ENCODE measurements at regions of chr1 and their contacts with region 1.

Region 1: DNA sequence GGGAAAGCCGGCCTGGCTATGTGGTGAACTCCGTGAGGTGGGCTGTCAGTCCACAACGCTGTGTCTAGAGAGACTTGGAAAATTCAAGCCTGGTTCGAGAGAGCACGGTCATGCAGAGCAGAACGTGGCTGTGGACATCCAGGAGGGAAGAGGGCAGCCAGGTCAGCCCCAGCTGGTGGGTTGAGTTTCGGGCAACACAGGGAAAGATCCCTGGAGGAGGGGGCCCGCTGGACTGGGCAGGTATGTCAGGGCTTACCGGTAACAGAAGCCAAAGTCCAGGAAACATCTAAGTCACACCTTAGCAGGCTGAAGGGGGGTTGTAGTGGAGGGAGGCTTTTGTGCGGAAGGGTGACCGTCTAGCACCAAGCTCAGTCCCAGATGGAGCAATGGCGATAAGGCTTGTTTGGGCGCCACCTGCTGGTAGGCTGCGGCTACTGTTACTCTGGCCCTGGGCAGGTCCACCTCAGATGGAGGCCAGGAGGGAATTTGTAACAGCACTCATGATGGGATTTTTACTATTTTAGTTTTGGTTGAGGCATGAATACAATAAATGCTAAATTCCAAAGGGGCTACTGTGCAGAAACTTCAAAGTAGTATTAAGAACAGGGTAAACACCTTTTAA is 143.3 kb upstream of the ZNF644 start:
- DNase-seq: peak; percentile 92

Region 2: GRCh38 chr1:91201176-91201575 is 36.0 kb after region 1 on chr1:
- CTCF ChIA-PET with region 1: interaction called, 18 read pairs
- POLR2A ChIA-PET with region 1: no interaction called
- DNase-seq: no peak

Region 3: DNA sequence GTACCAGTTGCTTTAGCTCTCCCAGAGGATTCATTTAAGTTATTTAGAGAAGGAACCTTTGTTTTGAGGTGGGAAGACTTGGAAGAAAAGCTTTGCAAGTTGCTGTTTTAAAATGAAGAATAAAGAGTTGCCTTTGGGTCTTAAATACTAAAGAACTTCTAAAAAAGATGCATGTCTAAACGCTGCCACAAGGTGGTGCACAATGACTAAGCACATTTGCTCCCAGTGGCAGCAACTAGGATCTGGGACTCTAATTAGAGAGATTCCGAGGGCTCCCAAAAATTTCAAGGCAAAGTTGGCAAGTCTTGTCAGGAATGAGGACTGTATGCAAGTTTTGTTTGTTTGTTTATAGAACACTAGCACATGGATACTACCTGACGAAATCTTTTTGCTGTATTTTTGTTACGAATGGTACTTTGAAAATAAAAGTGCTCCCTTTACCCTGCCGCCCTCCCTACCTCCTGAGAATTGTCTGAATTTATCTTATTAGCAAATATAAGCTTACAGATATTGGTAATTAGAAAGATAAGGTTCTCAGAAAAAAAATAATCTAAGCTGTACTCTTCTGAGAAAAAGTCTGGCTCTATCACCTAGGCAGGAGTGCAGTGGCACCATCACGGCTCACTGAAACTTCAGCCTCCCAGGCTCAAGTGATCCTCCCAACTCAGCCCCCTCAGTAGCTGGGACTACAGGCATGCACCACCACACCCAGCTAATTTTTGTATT is 117.7 kb after region 1 on chr1:
- CTCF ChIA-PET with region 1: interaction called, 103 read pairs
- POLR2A ChIA-PET with region 1: no interaction called
- DNase-seq: peak; percentile 67

Region 4: DNA sequence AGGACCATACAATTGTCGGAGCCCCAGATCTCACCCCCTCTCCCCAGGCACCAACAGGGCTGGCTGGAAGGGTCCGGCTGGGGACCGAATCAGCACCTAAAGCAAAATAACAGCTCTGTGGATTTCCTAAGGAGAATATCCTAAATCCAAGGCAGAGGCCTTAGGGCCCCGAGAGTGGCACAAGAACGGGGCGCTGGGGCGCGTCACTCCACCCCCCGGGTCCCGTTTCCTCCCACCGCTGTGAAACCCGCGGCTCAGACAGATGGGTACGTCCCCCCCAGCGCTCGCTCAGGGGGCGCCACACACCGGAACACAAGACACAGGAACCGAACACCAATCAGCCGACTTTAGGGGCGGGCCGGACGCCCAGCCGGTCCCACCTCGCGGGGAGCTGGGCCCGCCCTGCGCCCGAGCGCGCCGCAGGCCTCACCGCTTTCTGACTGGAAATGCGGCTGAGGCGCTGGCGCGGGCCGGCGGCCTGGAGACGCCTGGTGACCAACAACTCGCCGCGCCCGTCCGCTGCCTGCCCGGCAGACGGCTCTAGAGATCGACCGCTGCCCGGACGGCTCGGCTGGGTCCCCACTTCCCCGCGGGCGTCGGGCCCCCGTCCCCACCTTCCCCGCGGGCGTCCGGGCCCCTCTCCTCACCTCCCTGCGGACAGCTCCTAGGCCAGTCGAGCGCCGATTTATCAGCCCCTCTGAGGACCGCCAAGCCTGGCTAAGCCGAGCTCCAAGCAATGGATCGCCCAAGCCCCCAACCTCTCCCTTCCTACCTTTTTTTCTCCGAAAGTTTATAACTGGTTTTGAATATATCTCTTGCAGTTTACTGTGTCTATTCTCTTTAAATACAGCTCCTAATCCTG is 239.2 kb after region 1 on chr1 and contains the start of gene HFM1:
- CTCF ChIA-PET with region 1: interaction called, 10 read pairs
- POLR2A ChIA-PET with region 1: interaction called, 3 read pairs
- DNase-seq: peak; percentile 88

Measured in HEK293T (cell line).